CD4-positive, alpha-beta memory T cell (primary cell): ENCODE measurements at regions of chr5 and their contacts with region 1.

Region 1: DNA sequence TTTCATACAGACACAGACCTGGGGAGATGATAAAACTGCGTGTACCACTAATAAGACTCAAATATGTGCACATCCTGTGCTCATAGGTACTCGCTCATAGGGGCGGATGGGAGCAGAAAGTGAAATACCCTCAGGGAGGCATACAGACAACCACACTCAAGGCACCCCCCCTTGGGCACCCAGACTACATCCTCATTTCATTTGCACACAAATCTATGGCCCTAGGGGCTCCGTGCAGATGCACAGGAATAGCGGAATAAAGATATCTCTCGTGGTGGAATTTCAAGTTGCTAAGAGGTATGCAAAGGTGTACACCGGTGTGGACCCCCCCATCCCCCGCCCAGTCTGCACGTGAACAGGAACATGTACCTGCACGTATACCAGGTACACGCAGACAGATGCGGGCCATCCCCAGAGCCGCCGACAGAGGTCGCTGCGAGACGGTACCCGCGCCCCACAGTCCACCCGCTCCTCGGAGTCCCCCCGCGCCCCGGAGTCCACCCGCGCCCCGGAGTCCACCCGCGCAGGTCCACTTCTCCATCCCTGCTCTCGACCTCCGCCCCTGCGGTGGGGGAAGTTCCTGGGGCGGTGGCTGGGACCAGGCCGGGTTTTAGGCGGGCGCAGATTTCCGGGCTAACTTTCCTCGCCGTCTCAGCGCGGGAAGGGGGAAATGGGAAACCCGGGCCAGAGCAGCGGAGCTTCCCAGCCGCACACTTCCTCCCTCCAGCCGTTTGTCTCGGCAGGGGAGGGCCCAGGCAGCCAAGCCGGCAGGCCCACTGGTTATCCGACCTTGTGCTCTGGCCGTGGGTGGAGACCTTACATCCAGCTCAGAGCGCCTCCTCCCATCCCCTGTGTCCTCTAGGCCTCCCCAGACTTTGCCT is 1.0 kb upstream of the IL12B start:
- DNase-seq: peak; percentile 72 to 79 (median 74)
- H3K4me3 ChIP-seq: peak overlapping the region in 1 of 2 donors; percentile 46
- H3K4me3 Mint-ChIP-seq: peak overlapping the region; percentile 73 to 87 (median 80)
- H3K27ac ChIP-seq: peak overlapping the region; percentile 23
- H3K27ac Mint-ChIP-seq: peak overlapping the region; percentile 47 to 88 (median 80)
- H3K4me1 ChIP-seq: peaks cover 19% of the 10 kb centered on the region
- H3K4me1 Mint-ChIP-seq: peaks cover 15 to 39% (median 27%) of the 10 kb centered on the region in 4 donors
- H3K27me3 ChIP-seq: no peaks in the 10 kb centered on the region
- H3K27me3 Mint-ChIP-seq: peaks cover 0 to 2% of the 10 kb centered on the region in 2 donors

Region 2: GRCh38 chr5:159412284-159413046 is 81.1 kb after region 1 on chr5:
- CTCF ChIA-PET with region 1: interaction called, 30 read pairs
- POLR2A ChIA-PET with region 1: interaction called, 12 read pairs
- intact Hi-C with region 1: loop called (anchors 2 kb)
- DNase-seq: peak; percentile 83 to 93 (median 86)
- H3K4me3 ChIP-seq: no peak overlapping the region
- H3K4me3 Mint-ChIP-seq: peak overlapping the region in 7 of 8 donors; percentile 40 to 81 (median 71)
- H3K27ac ChIP-seq: peak overlapping the region; percentile 14
- H3K27ac Mint-ChIP-seq: peak overlapping the region; percentile 91 to 96 (median 94)
- H3K4me1 ChIP-seq: peaks cover 56% of the 10 kb centered on the region
- H3K4me1 Mint-ChIP-seq: peaks cover 41 to 62% (median 51%) of the 10 kb centered on the region in 4 donors
- H3K27me3 ChIP-seq: no peaks in the 10 kb centered on the region
- H3K27me3 Mint-ChIP-seq: no peaks in the 10 kb centered on the region

Region 3: GRCh38 chr5:159444441-159445082 is 113.2 kb after region 1 on chr5:
- CTCF ChIA-PET with region 1: interaction called, 10 read pairs
- POLR2A ChIA-PET with region 1: no interaction called
- intact Hi-C with region 1: loop called (anchors 1 kb)
- DNase-seq: peak in 4 of 5 donors; percentile 26 to 49 (median 32)
- H3K4me3 ChIP-seq: no peak overlapping the region
- H3K4me3 Mint-ChIP-seq: no peak overlapping the region
- H3K27ac ChIP-seq: no peak overlapping the region
- H3K27ac Mint-ChIP-seq: peak overlapping the region in 1 of 7 donors; percentile 35
- H3K4me1 ChIP-seq: no peaks in the 10 kb centered on the region
- H3K4me1 Mint-ChIP-seq: peaks cover 0 to 6% (median 5%) of the 10 kb centered on the region in 4 donors
- H3K27me3 ChIP-seq: no peaks in the 10 kb centered on the region
- H3K27me3 Mint-ChIP-seq: no peaks in the 10 kb centered on the region

Region 4: DNA sequence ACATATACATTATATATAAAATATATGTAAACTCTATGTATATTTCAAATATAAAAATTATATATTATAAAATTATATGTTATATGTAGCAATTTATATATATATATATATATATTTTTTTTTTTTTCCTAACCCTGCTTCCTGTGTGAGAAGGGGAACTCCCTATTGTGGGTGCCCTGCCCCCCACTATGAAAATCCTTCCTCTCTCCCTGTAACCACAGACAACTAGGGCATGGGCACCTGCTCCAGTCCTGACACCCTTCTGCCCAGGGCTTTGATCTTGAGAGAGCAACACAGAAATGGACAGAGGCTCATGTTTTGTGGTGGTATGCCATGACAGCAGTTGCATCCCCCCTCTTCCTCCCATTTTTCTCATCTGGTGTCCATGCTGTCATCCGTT is 147.6 kb after region 1 on chr5:
- CTCF ChIA-PET with region 1: no interaction called
- POLR2A ChIA-PET with region 1: no interaction called
- intact Hi-C with region 1: no loop called
- DNase-seq: peak; percentile 15 to 36 (median 23)
- H3K4me3 ChIP-seq: no peak overlapping the region
- H3K4me3 Mint-ChIP-seq: peak overlapping the region in 6 of 8 donors; percentile 7 to 63 (median 47)
- H3K27ac ChIP-seq: no peak overlapping the region
- H3K27ac Mint-ChIP-seq: peak overlapping the region in 2 of 7 donors; percentile 24 to 81
- H3K4me1 ChIP-seq: peaks cover 14% of the 10 kb centered on the region
- H3K4me1 Mint-ChIP-seq: peaks cover 9 to 19% (median 14%) of the 10 kb centered on the region in 4 donors
- H3K27me3 ChIP-seq: no peaks in the 10 kb centered on the region
- H3K27me3 Mint-ChIP-seq: no peaks in the 10 kb centered on the region

Region 5: DNA sequence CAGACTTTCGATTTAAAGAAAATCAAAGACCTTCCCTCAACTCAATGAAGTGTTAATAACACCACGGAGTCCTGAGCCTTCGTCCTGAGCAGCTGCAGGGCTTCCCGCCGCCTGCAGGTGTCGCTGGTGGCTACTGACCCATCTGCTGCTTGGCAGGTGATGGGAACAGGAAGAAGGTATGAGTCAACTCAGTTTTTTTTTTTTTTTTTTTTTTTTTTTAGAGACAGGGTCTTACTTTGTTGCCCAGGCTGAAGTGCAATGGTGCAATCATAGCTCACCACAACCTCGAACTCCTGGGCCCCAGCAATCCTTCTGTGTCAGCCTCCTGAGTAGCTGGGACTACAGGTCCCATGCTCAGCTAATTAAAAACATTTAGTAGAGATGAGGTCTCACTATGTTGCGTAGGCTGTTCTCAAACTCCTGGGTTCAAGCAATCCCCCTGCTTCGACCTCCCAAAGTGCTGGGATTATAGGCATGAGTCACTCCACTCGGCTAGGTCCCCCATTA is 184.6 kb after region 1 on chr5:
- CTCF ChIA-PET with region 1: interaction called, 5 read pairs
- POLR2A ChIA-PET with region 1: no interaction called
- intact Hi-C with region 1: loop called (anchors 2 kb)
- DNase-seq: peak; percentile 41 to 59 (median 56)
- H3K4me3 ChIP-seq: no peak overlapping the region
- H3K4me3 Mint-ChIP-seq: peak overlapping the region in 2 of 8 donors; percentile 30 to 71
- H3K27ac ChIP-seq: no peak overlapping the region
- H3K27ac Mint-ChIP-seq: no peak overlapping the region
- H3K4me1 ChIP-seq: no peaks in the 10 kb centered on the region
- H3K4me1 Mint-ChIP-seq: peaks cover 5 to 8% (median 8%) of the 10 kb centered on the region in 4 donors
- H3K27me3 ChIP-seq: no peaks in the 10 kb centered on the region
- H3K27me3 Mint-ChIP-seq: no peaks in the 10 kb centered on the region